WTC11 (cell line): ENCODE measurements at regions of chr1 and their contacts with region 1.

Region 1: GRCh38 chr1:31422505-31423319 is 9.7 kb downstream of the SERINC2 start:
- DNase-seq: peak; percentile 83
- ATAC-seq: peak; percentile 74
- H3K4me3 Mint-ChIP-seq: no peak overlapping the region
- H3K27ac Mint-ChIP-seq: no peak overlapping the region
- H3K4me1 Mint-ChIP-seq: peaks cover 12% of the 10 kb centered on the region; the same call in 1 of the 2 replicates
- H3K27me3 Mint-ChIP-seq: no peaks in the 10 kb centered on the region
- CTCF ChIP-seq: peak; percentile 83

Region 2: GRCh38 chr1:31372961-31373896 is 49.5 kb before region 1 on chr1 and contains the start of gene FABP3:
- CTCF ChIA-PET with region 1: interaction called, 45 read pairs
- POLR2A ChIA-PET with region 1: interaction called, 5 read pairs
- DNase-seq: peak; percentile 95
- ATAC-seq: peak; percentile 72
- H3K4me3 Mint-ChIP-seq: peak within 1 kb of the TSS; percentile 70
- H3K27ac Mint-ChIP-seq: peak within 1 kb of the TSS; percentile 94
- H3K4me1 Mint-ChIP-seq: peaks cover 52% of the 10 kb centered on the region
- H3K27me3 Mint-ChIP-seq: peaks cover 4% of the 10 kb centered on the region
- CTCF ChIP-seq: no peak
- total RNA-seq, gene FABP3: 18.0 to 25.0 TPM (median 19.0 TPM) in 3 replicates

Region 3: DNA sequence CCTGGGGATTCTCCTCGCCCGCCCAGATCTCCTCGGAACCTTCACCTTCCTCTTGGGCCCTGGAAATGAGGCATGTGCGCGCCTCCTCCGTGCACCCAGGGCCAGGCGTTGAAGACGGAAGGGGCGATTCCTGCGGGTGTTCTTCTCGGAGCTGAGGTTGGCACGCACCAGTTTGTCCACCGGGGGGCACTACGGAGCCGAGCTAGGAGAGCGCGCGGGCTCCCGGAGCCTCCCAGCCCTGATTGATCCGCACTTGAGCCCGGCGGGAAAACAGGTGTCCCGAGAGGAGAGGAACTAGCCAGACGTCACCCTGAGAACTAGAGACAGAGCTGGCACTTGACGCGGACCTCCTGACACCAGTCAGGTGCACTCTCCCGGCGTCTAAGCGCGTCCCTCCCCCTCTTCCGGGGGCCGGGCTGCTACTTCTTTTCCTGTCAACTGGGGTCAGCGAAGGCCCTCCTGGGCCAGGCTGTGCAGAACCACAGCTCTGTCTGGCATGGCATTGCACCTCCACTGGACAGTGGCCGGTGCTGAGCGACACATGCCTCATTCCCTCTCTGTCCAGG is 28.0 kb before region 1 on chr1:
- CTCF ChIA-PET with region 1: interaction called, 225 read pairs
- POLR2A ChIA-PET with region 1: interaction called, 6 read pairs
- DNase-seq: peak; percentile 96
- ATAC-seq: peak; percentile 95
- H3K4me3 Mint-ChIP-seq: peak overlapping the region; percentile 63
- H3K27ac Mint-ChIP-seq: no peak overlapping the region
- H3K4me1 Mint-ChIP-seq: peaks cover 19% of the 10 kb centered on the region
- H3K27me3 Mint-ChIP-seq: peaks cover 9% of the 10 kb centered on the region
- CTCF ChIP-seq: peak; percentile 72

Region 4: GRCh38 chr1:31434171-31434871 is 11.6 kb after region 1 on chr1:
- CTCF ChIA-PET with region 1: interaction called, 10 read pairs
- POLR2A ChIA-PET with region 1: no interaction called
- DNase-seq: no peak
- ATAC-seq: peak; percentile 64
- H3K4me3 Mint-ChIP-seq: no peak overlapping the region
- H3K27ac Mint-ChIP-seq: no peak overlapping the region
- H3K4me1 Mint-ChIP-seq: peaks cover 8% of the 10 kb centered on the region
- H3K27me3 Mint-ChIP-seq: no peaks in the 10 kb centered on the region; the same call in 1 of the 2 replicates
- CTCF ChIP-seq: no peak

Region 5: DNA sequence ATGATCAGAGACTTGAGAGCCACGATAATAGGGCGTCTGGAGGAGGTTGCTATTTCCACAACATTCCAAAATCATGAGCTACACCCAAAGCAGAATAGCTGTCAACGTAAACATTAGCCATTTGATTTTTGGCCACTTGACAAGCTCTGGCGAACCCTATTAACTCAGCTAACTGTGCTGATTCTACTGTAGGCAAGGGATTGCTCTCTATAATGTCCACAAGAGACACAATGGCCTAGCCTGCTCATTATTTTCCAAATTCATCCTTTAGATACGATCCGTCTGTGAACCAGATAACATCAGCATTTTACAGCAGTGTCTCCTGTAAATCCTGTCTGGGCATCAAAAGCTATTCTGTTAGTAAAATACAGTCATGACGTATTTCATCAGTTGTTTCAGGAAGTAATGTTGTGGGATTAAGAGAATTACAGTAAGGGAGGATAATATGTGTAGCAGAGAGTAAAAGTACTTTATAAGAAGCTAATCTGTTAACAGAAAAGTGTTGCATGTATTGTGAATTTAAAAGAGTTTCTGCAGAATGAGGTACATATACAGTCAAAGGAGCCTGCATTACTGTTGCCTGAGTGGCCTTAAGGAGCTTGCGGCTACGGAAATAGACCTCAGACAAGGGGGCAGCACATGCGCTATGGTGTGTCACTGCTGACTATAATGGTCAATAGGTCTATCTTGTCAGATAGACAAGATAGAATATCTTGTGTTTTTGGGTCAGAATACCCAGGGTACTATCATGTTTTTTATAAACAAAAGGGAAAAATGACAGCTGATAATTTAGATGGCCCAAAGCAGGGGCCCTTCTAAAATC is 108.7 kb after region 1 on chr1:
- CTCF ChIA-PET with region 1: interaction called, 10 read pairs
- POLR2A ChIA-PET with region 1: no interaction called
- DNase-seq: no peak
- ATAC-seq: peak; percentile 48; the same call in 1 of the 2 replicates
- H3K4me3 Mint-ChIP-seq: no peak overlapping the region
- H3K27ac Mint-ChIP-seq: no peak overlapping the region; the same call in 1 of the 2 replicates
- H3K4me1 Mint-ChIP-seq: peaks cover 4% of the 10 kb centered on the region
- H3K27me3 Mint-ChIP-seq: no peaks in the 10 kb centered on the region; the same call in none of the 2 replicates
- CTCF ChIP-seq: no peak